HEK293 (cell line): ENCODE measurements at regions of chr17 and their contacts with region 1.

Region 1: DNA sequence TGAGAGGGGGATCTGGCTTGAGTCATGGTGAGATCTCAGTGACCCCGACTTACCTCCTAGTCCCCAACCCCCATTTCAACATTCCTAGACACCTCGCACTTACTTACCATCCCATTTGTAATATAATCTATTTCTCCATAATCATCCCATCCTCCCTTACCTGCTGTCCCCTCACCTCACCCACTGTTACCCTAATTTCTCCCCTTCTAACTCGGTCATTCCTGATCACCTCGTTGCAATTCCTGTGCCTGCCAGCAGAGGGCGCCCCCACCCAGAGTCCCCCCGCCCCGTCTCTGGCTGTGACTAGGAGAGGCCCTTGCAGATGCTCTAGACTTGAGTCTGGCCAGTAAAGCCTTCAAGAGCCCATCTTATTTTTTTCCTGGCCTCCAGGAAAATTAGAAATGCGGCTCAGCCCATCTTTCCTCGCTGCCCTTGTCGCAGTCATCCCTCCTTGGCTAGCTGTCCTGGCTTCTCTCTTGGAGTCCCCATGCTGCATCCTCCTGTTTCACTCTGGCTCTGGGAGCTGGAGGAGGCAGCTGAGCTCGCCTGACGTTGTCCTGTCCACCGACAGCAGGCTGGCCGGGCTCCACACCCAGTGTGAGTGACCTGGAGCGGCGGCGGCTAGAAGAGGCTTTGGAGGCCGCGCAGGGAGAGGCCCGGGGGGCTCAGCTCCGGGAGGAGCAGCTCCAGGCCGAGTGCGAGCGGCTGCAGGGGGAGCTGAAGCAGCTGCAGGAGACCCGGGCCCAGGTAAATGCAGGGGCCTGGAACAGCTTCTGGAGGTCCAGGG is 5.0 kb downstream of the TBKBP1 start:
- H3K4me3 ChIP-seq: no peak overlapping the region
- H3K27ac ChIP-seq: no peak overlapping the region
- H3K4me1 ChIP-seq: peaks cover 3% of the 10 kb centered on the region; the same call in 1 of the 2 replicates
- CTCF ChIP-seq: peak; percentile 80

Region 2: DNA sequence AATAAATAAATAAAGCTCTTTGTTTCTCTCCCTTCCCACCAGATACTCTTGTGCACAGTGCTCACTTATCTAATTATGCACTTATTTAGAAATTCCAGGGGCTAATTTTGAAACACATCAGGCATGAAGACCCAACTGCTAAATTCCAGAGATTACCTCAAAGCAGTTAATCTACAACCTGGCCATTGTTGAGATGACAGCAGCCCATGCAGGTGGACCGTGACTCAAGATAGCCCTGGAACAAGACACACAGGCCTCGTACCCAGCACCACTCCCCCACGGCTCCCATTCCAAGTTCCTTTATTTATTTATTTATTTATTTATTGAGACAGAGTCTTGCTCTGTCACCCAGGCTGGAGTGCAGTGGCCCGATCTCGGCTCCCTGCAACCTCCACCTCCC is 228.1 kb before region 1 on chr17:
- CTCF ChIA-PET with region 1: no interaction called
- POLR2A ChIA-PET with region 1: no interaction called
- H3K4me3 ChIP-seq: no peak overlapping the region
- H3K27ac ChIP-seq: no peak overlapping the region
- H3K4me1 ChIP-seq: no peaks in the 10 kb centered on the region
- CTCF ChIP-seq: no peak

Region 3: DNA sequence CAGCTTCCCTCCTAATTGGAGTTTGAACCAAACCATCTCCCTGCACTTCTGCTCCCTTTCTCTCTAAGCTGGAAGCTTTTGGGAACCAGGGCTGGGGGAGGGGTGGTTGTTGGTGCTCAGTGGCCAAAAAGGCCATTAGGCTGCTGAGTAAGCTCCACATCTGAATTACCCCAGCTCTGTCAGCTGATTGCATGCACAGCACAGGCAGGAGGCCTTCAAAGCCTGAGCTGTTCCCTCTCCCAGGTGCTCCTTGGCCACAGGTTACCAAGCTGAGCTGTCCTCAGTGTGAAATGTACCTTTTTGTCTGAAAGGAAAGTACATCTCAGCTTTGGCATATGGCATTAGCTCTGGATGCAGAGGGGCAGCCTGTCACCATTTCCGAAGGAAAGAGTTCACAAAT is 11.2 kb before region 1 on chr17:
- CTCF ChIA-PET with region 1: interaction called, 41 read pairs
- POLR2A ChIA-PET with region 1: interaction called, 4 read pairs
- H3K4me3 ChIP-seq: no peak overlapping the region
- H3K27ac ChIP-seq: no peak overlapping the region
- H3K4me1 ChIP-seq: peaks cover 3% of the 10 kb centered on the region; the same call in 1 of the 2 replicates
- CTCF ChIP-seq: no peak

Region 4: DNA sequence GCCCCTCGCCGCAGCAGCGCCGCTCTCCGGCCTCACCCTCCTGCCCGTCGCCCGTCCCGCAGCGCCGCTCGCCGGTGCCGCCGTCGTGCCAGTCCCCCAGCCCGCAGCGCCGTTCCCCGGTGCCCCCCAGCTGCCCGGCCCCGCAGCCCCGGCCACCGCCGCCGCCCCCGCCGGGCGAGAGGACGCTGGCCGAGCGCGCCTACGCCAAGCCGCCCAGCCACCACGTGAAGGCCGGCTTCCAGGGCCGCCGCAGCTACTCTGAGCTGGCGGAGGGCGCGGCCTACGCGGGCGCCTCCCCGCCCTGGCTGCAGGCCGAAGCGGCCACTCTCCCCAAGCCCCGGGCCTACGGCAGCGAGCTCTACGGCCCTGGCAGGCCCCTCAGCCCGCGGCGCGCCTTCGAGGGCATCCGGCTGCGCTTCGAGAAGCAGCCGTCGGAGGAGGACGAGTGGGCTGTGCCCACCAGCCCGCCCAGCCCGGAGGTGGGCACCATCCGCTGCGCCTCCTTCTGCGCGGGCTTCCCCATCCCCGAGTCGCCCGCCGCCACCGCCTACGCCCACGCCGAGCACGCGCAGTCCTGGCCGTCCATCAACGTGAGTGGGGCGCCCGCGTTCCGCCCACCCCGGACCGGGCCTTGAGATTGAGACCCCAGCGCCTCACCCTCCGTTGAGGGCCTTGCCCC is 10.1 kb after region 1 on chr17:
- CTCF ChIA-PET with region 1: interaction called, 30 read pairs
- POLR2A ChIA-PET with region 1: interaction called, 5 read pairs
- H3K4me3 ChIP-seq: no peak overlapping the region
- H3K27ac ChIP-seq: no peak overlapping the region
- H3K4me1 ChIP-seq: no peaks in the 10 kb centered on the region
- CTCF ChIP-seq: no peak

Region 5: GRCh38 chr17:47717261-47717697 is 18.3 kb after region 1 on chr17:
- CTCF ChIA-PET with region 1: interaction called, 25 read pairs
- POLR2A ChIA-PET with region 1: interaction called, 9 read pairs
- H3K4me3 ChIP-seq: no peak overlapping the region
- H3K27ac ChIP-seq: no peak overlapping the region
- H3K4me1 ChIP-seq: peaks cover 2% of the 10 kb centered on the region
- CTCF ChIP-seq: peak; percentile 70

Region 6: DNA sequence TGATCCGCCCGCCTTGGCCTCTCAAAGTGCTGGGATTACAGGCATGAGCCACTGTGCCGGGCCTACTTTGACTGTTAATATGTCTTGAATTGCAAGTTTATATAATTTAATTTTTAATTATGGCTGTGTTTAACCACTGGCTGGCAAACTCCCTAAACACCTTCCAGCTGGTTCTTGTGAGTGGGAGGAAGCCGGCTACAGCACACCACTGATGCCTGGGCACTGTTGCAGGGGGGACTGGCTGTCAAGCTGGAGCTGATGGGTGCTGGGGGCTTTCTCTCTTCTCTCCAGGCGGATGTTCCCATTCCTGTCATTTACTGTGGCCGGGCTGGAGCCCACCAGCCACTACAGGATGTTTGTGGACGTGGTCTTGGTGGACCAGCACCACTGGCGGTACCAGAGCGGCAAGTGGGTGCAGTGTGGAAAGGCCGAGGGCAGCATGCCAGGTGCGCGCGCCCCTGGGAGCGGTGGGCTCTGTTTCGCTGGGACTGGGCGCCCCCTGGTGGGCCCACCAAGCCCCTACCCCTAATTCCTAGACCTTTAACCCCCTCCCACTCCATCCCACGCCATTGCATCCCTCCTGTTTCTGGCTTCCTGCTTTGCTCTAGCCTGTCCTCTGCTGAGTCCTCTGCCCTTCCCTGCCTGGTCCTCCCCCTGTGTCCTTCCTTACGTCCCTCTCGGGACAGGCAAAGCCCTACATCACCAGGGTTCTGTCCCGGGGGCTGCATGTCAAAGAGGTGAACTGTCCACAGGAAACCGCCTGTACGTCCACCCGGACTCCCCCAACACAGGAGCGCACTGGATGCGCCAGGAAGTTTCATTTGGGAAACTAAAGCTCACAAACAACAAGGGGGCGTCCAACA is 43.6 kb after region 1 on chr17:
- CTCF ChIA-PET with region 1: interaction called, 58 read pairs
- POLR2A ChIA-PET with region 1: interaction called, 3 read pairs
- H3K4me3 ChIP-seq: no peak overlapping the region
- H3K27ac ChIP-seq: no peak overlapping the region
- H3K4me1 ChIP-seq: no peaks in the 10 kb centered on the region
- CTCF ChIP-seq: peak; percentile 40; the same call in 1 of the 2 replicates

Region 7: GRCh38 chr17:47789611-47790561 is 90.9 kb after region 1 on chr17:
- CTCF ChIA-PET with region 1: interaction called, 15 read pairs
- POLR2A ChIA-PET with region 1: interaction called, 6 read pairs
- H3K4me3 ChIP-seq: peak overlapping the region; percentile 50
- H3K27ac ChIP-seq: no peak overlapping the region
- H3K4me1 ChIP-seq: 0 out of 2 replicates have a peak, but pooled peaks cover 2% of the 10 kb centered on the region
- CTCF ChIP-seq: peak; percentile 84